ENCODE measurements at regions of chr19 and their contacts with region 1.

Region 1: DNA sequence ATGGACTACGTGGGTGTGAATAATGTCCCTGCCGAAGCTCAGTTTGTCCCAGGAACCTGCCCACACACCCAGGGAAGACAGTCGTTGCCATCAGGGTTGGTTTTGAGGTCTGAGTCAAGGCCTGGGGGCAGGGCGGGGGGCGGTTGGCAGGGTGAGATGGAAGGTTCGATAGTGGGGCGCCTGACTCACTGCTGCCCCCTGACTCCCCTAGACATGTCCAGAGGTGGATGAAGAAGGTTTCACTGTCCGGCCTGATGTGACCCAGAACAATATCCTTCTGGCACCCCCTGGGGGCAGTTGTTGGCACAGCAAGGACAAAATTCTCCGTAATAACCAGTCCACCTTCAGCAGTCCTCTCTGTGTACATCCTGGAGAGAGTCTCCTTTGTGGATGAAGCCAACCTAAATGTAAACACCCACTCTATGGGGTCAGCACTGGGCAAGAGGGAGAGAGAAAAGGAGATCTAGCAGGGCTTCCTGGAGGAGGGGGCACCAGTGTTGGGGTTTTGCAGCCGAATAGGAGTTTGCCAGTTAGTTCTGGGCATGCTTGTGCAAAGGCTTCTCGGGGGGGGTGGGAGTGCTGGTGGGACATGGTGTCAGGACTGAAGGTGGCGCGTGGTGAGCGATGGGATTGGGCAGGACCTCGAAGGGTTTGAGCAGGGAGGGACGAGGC is 19.6 kb upstream of the B3GNT3 start:
- DNase-seq: peak in 1 of 10 donors; percentile 49

Region 2: DNA sequence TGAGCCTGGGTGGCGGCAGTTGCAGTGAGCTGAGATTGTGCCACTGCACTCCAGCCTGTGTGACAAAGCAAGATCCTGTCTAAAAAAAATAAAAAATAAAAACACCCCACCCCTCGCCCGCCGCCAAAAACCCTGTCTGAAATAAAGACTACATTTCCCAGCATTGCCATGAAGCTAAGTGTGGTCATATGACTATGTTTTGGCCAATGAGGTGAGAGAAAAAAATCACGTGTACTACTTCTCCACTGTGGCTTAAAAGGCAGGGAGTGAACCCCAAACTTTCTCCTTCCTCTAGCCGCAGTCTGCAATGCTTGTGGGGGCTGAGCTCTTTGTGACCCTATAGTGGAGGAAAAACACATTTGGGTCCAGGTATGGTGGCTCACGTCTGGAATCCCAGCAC is 165.0 kb before region 1 on chr19:
- intact Hi-C with region 1: loop called (anchors 5 kb)
- DNase-seq: peak in 1 of 10 donors; percentile 22

Region 3: GRCh38 chr19:17889609-17890214 is 114.3 kb after region 1 on chr19:
- intact Hi-C with region 1: no loop called
- DNase-seq: peak in 1 of 10 donors; percentile 11

Measured in posterior cingulate gyrus (tissue), 11 donors.